Mammary epithelial cell (primary cell): ENCODE measurements at regions of chr15 and their contacts with region 1.

Region 1: GRCh38 chr15:29844284-29844913 is 22.1 kb upstream of the TJP1 start:
- DNase-seq: peak; percentile 90
- H3K4me3 ChIP-seq: no peak overlapping the region
- H3K27ac ChIP-seq: peak overlapping the region; percentile 31
- H3K4me1 ChIP-seq: peaks cover 31% of the 10 kb centered on the region
- H3K27me3 ChIP-seq: no peaks in the 10 kb centered on the region
- CTCF ChIP-seq: no peak

Region 2: GRCh38 chr15:29788433-29789034 is 55.9 kb before region 1 on chr15:
- CTCF ChIA-PET with region 1: no interaction called
- dilution Hi-C with region 1: no loop called
- in situ Hi-C with region 1: loop called in 1 of 2 experiments (anchors 10 kb)
- intact Hi-C with region 1: no loop called
- DNase-seq: peak; percentile 51
- H3K4me3 ChIP-seq: no peak overlapping the region
- H3K27ac ChIP-seq: no peak overlapping the region
- H3K4me1 ChIP-seq: peaks cover 9% of the 10 kb centered on the region
- H3K27me3 ChIP-seq: no peaks in the 10 kb centered on the region
- CTCF ChIP-seq: no peak

Region 3: DNA sequence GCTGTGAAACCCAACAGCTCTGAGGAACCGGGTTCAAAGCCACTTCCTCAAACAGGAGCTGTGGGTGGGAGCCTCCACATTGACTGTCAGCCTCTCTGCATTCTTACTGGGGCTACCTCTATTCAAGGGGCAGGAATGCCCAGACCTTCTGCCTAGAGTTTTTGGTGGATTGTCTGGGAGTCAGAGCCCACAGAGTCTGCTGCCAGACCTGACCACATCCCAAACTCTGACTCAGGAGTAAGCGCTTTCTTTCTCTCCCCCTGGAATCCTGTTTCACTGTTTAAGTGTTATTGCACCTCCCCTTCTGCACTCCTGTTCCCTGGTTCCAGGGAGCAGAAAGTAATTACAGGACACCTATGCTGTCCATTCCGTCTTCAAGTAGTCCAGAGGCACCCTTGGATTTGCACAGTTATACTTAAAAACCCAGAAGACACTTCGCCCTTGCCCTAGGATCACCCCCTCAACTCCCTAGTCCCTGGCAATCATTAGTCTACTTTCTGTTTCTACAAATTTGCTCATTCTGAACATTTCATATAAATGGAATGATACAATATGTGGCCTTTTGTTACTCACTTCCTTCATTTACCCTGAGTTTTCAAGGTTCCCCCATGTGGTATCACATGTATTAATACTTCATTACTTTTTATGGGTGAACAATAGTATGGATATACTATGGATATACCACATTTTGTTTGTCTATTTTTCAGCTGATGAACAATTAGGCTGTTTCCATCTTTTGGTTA is 15.7 kb after region 1 on chr15:
- CTCF ChIA-PET with region 1: no interaction called
- dilution Hi-C with region 1: no loop called
- in situ Hi-C with region 1: no loop called
- intact Hi-C with region 1: loop called (anchors 2 kb)
- DNase-seq: peak; percentile 70
- H3K4me3 ChIP-seq: no peak overlapping the region
- H3K27ac ChIP-seq: peak overlapping the region; percentile 44
- H3K4me1 ChIP-seq: peaks cover 23% of the 10 kb centered on the region
- H3K27me3 ChIP-seq: no peaks in the 10 kb centered on the region
- CTCF ChIP-seq: no peak

Region 4: DNA sequence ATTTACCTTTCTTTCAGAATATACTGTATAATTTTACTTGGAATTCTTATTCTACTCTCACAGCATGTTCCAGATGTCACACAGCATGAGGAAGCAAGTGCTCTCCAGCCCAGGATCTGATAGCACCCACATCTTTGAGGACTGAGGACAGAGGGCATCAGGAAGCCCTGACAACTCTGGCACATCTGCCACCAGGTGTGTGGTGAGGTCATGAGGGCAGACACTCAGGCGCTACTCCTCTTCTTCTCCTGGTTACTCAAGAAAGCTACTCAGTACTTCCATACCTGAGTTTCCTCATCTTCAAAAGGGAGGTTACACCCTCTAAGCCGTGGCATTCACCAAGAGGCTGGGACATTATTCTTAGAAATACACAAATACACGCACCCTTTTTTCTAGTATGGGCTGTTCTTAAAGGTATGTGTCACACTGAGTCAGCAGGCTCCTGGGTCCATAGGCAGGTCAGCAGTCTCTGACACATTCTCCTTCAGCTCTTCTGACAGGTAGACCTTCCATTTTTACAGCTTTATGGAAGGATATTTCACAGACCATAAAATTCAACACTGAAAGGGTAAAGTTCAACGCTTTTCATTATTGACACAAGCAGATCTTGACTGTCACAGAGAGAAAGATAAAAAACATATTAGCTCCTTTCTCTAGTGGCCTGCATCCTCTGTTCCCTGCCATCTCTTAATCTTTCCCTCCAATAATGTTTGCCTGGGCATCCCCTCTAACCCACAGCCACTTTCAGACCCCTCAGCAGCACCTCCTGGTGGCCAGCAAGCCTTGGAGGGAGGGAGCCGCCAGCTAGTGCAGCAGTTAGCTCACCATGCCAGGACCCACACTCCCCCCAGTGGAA is 81.1 kb after region 1 on chr15:
- CTCF ChIA-PET with region 1: no interaction called
- dilution Hi-C with region 1: no loop called
- in situ Hi-C with region 1: loop called in 1 of 2 experiments (anchors 10 kb)
- intact Hi-C with region 1: loop called (anchors 2 kb)
- DNase-seq: peak; percentile 93
- H3K4me3 ChIP-seq: no peak overlapping the region
- H3K27ac ChIP-seq: peak overlapping the region; percentile 76
- H3K4me1 ChIP-seq: peaks cover 42% of the 10 kb centered on the region
- H3K27me3 ChIP-seq: no peaks in the 10 kb centered on the region
- CTCF ChIP-seq: peak; percentile 56 to 62

Region 5: DNA sequence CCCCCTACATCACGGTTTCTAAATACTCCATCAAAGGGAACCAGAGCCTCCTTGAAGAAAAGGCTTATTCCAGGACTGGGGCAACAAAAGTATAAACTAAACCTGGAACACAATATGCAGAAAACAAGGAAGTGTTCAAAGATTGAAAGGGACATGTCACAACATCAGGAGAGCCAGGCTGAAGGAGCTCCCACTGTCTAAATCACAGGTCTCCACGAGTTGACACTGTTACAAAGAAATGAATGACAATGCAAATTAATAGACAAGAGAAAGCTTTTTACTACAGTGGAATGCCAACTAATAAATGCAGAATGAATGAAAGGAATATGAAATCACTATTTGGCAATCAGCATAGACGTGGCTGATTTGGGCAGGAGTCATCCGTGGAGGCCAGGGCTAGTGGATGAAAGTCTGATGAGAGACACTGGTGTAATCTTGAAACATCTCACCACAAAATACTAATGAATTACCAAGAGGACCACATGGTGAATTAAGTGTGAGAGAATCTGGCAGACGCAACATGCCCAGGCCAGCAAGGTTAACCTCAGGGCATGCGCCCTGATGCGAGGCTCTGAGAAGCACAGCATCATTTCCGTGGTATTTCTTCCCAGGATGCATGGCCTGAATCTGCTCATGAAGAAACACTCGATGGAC is 101.7 kb after region 1 on chr15:
- CTCF ChIA-PET with region 1: no interaction called
- dilution Hi-C with region 1: no loop called
- in situ Hi-C with region 1: no loop called
- intact Hi-C with region 1: loop called (anchors 5 kb)
- DNase-seq: peak; percentile 97
- H3K4me3 ChIP-seq: no peak overlapping the region
- H3K27ac ChIP-seq: peak overlapping the region; percentile 80
- H3K4me1 ChIP-seq: peaks cover 19% of the 10 kb centered on the region
- H3K27me3 ChIP-seq: no peaks in the 10 kb centered on the region
- CTCF ChIP-seq: no peak